Caco-2 (cell line): ENCODE measurements at regions of chr4 and their contacts with region 1.

Region 1: GRCh38 chr4:129350834-129351721 is 255.1 kb downstream of the C4orf33 start:
- DNase-seq: no peak
- H3K4me3 ChIP-seq: no peak overlapping the region
- H3K4me3 Mint-ChIP-seq: no peak overlapping the region
- H3K27ac Mint-ChIP-seq: no peak overlapping the region
- H3K4me1 ChIP-seq: no peaks in the 10 kb centered on the region
- H3K4me1 Mint-ChIP-seq: no peaks in the 10 kb centered on the region
- H3K27me3 ChIP-seq: no peaks in the 10 kb centered on the region; the same call in 1 of the 2 replicates
- H3K27me3 Mint-ChIP-seq: peaks cover 3% of the 10 kb centered on the region
- CTCF ChIP-seq: no peak

Region 2: GRCh38 chr4:128958202-128958601 is 392.9 kb before region 1 on chr4:
- CTCF ChIA-PET with region 1: no interaction called
- POLR2A ChIA-PET with region 1: no interaction called
- intact Hi-C with region 1: loop called (anchors 5 kb)
- DNase-seq: no peak
- H3K4me3 ChIP-seq: no peak overlapping the region
- H3K4me3 Mint-ChIP-seq: no peak overlapping the region
- H3K27ac Mint-ChIP-seq: no peak overlapping the region
- H3K4me1 ChIP-seq: peaks cover 5% of the 10 kb centered on the region; the same call in 1 of the 2 replicates
- H3K4me1 Mint-ChIP-seq: peaks cover 6% of the 10 kb centered on the region
- H3K27me3 ChIP-seq: no peaks in the 10 kb centered on the region
- H3K27me3 Mint-ChIP-seq: no peaks in the 10 kb centered on the region
- CTCF ChIP-seq: no peak